Activated CD8-positive, alpha-beta T cell treated with anti-CD3 and anti-CD28 coated beads, Interleukin-2, amount 10 ng/mL, durations not matched to agents 7 days and 5 days (primary cell): ENCODE measurements at regions of chr2 and their contacts with region 1.

Region 1: GRCh38 chr2:224793946-224794345 is 77.8 kb upstream of the CCDC195 start:
- DNase-seq: no peak
- ATAC-seq: no peak
- H3K4me3 Mint-ChIP-seq: no peak overlapping the region
- H3K27ac Mint-ChIP-seq: no peak overlapping the region
- H3K4me1 Mint-ChIP-seq: no peaks in the 10 kb centered on the region
- H3K27me3 Mint-ChIP-seq: no peaks in the 10 kb centered on the region

Region 2: GRCh38 chr2:224778474-224778877 is 15.5 kb before region 1 on chr2:
- CTCF ChIA-PET with region 1: interaction called, 11 read pairs
- POLR2A ChIA-PET with region 1: no interaction called
- DNase-seq: peak; percentile 74
- ATAC-seq: peak; percentile 67
- H3K4me3 Mint-ChIP-seq: no peak overlapping the region
- H3K27ac Mint-ChIP-seq: no peak overlapping the region
- H3K4me1 Mint-ChIP-seq: no peaks in the 10 kb centered on the region
- H3K27me3 Mint-ChIP-seq: no peaks in the 10 kb centered on the region